ENCODE measurements at regions of chr18 and their contacts with region 1.

Region 1: GRCh38 chr18:477565-477964 is 22.9 kb downstream of the COLEC12 start:
- DNase-seq: no peak
- H3K4me3 ChIP-seq: no peak overlapping the region
- H3K27ac ChIP-seq: no peak overlapping the region
- H3K4me1 ChIP-seq: peaks cover 5 to 17% (median 10%) of the 10 kb centered on the region in 4 experiments
- H3K27me3 ChIP-seq: no peaks in the 10 kb centered on the region; a peak in 1 of 7 replicates
- CTCF ChIP-seq: peak; percentile 66 to 82 (median 76)
- EP300 ChIP-seq: no peak
- POLR2A ChIP-seq: no peak
- RAD21 ChIP-seq: peak; percentile 69 to 78

Region 2: DNA sequence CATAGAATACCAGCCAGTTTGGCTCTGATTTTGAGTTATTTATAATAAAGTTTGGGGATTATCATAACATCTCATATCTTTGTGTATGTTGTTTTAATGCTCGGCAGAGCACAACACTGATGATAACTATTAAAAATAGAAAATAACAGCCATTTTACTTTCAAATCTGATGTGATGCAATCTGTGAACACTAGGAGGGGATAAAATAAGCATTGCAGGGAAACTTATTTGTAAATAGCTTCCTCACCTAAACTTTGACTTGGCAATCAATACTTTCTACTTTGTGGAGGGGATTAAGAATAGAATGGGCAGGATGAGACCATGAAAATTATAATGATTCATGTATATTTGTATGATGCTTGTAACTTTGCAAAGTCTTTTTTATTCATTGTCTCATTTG is 264.8 kb before region 1 on chr18:
- CTCF ChIA-PET with region 1: no interaction called
- POLR2A ChIA-PET with region 1: no interaction called
- DNase-seq: no peak
- H3K4me3 ChIP-seq: no peak overlapping the region
- H3K27ac ChIP-seq: no peak overlapping the region
- H3K4me1 ChIP-seq: peaks cover 0 to 3% (median 0%) of the 10 kb centered on the region in 4 experiments; a peak in 1 of 7 replicates
- H3K27me3 ChIP-seq: peaks cover 0 to 1% (median 0%) of the 10 kb centered on the region in 4 experiments; a peak in 1 of 7 replicates
- CTCF ChIP-seq: no peak
- EP300 ChIP-seq: no peak
- POLR2A ChIP-seq: no peak
- RAD21 ChIP-seq: no peak

Region 3: DNA sequence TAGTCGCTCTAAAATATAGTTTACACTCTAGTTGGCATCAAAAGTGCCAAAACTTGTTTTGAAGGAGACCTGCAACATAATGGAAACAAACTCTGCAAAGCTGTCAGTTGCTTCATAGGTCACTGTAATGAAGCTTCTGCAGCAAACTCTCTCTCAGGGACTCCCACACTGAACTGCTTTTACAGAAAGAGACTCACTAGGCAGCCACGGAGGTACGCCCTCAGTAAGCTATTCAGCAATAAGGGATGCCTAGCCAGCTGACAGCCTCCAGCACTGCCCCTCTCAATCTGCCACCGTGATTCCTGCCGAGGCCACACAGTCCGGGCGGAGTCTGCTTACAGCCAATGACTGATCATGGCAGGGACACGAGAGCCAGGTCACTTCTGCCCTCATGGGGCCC is 28.2 kb before region 1 on chr18:
- CTCF ChIA-PET with region 1: no interaction called
- POLR2A ChIA-PET with region 1: no interaction called
- DNase-seq: no peak
- H3K4me3 ChIP-seq: no peak overlapping the region
- H3K27ac ChIP-seq: no peak overlapping the region
- H3K4me1 ChIP-seq: no peaks in the 10 kb centered on the region
- H3K27me3 ChIP-seq: no peaks in the 10 kb centered on the region
- CTCF ChIP-seq: no peak
- EP300 ChIP-seq: no peak
- POLR2A ChIP-seq: no peak
- RAD21 ChIP-seq: no peak

Region 4: GRCh38 chr18:489244-490023 is 11.9 kb after region 1 on chr18:
- CTCF ChIA-PET with region 1: interaction called, 20 read pairs
- POLR2A ChIA-PET with region 1: no interaction called
- DNase-seq: no peak
- H3K4me3 ChIP-seq: no peak overlapping the region
- H3K27ac ChIP-seq: no peak overlapping the region
- H3K4me1 ChIP-seq: peaks cover 0 to 6% (median 0%) of the 10 kb centered on the region in 4 experiments; a peak in 1 of 7 replicates
- H3K27me3 ChIP-seq: no peaks in the 10 kb centered on the region; a peak in 1 of 7 replicates
- CTCF ChIP-seq: no peak
- EP300 ChIP-seq: no peak
- POLR2A ChIP-seq: no peak
- RAD21 ChIP-seq: no peak

Measured in H1 (cell line).